ENCODE measurements at regions of chr3 and their contacts with region 1.

Region 1: DNA sequence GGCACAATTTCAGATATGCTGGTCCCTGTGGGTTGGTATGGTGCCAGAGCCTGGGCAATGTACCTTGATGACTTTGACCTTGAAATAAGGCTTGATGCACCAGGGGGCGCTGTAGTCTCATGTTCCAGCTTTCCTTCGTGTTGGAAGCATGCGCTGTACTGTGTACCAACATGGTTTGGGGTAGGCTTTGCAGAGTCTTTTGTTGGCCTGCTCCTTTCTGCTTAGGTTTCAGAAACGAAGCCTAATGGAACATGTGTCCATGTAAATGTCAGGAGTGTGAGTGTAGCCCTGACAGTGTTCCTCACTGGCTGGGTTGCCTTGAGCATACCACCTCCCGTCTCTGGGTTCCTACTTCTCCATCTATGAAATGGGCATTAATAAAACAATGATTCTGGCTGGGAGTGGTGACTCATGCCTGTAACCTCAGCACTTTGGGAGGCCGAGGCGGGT is 3.6 kb upstream of the CCR4 start:
- DNase-seq: peak; percentile 96
- H3K4me3 Mint-ChIP-seq: no peak overlapping the region
- H3K27ac Mint-ChIP-seq: peak overlapping the region; percentile 97
- H3K4me1 Mint-ChIP-seq: peaks cover 46% of the 10 kb centered on the region
- H3K27me3 Mint-ChIP-seq: no peaks in the 10 kb centered on the region

Region 2: GRCh38 chr3:32922078-32922477 is 25.7 kb before region 1 on chr3:
- CTCF ChIA-PET with region 1: no interaction called
- POLR2A ChIA-PET with region 1: no interaction called
- intact Hi-C with region 1: no loop called
- DNase-seq: no peak
- H3K4me3 Mint-ChIP-seq: no peak overlapping the region
- H3K27ac Mint-ChIP-seq: no peak overlapping the region
- H3K4me1 Mint-ChIP-seq: no peaks in the 10 kb centered on the region
- H3K27me3 Mint-ChIP-seq: peaks cover 1% of the 10 kb centered on the region

Region 3: DNA sequence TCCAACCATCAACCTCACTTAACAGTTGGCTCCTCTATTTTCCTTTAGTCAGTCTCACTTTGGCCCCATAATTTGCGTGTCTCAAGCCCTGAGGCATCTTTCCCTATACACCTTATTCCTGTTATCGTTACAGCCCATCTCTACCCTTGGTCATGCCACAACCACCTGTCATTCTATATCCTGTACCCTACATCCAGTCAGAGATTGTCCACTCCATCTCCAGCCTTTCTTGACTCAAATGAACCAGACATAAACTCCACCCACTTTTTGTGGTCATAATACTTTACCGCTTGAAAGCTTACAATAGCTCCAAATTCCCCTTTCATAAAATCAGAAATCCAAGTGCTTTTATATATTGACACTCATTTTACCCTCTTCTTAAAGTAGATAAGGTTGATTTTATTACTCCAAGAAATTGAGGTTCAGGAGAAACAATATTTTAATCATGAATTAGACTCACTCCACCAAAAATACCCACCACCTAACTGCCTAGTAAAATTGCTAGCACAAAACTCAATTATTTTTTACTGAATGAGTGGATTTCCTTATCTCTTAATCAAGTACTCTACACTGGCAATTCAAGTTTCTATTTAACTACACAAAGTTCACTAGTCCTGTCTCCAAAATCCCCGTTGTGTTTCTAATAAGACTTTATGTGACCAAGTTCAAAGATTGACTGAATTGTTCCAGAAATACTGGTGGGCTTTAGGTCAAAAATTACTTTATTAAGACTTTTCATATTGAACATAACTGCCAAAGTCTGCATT is 12.8 kb after region 1 on chr3:
- CTCF ChIA-PET with region 1: interaction called, 24 read pairs
- POLR2A ChIA-PET with region 1: interaction called, 18 read pairs
- intact Hi-C with region 1: loop called (anchors 1 kb)
- DNase-seq: peak; percentile 54
- H3K4me3 Mint-ChIP-seq: peak overlapping the region; percentile 41
- H3K27ac Mint-ChIP-seq: peak overlapping the region; percentile 97
- H3K4me1 Mint-ChIP-seq: peaks cover 84% of the 10 kb centered on the region
- H3K27me3 Mint-ChIP-seq: no peaks in the 10 kb centered on the region

Region 4: GRCh38 chr3:32998631-32999451 is 51.0 kb after region 1 on chr3:
- CTCF ChIA-PET with region 1: interaction called, 21 read pairs
- POLR2A ChIA-PET with region 1: interaction called, 13 read pairs
- intact Hi-C with region 1: no loop called
- DNase-seq: no peak
- H3K4me3 Mint-ChIP-seq: peak overlapping the region; percentile 59
- H3K27ac Mint-ChIP-seq: peak overlapping the region; percentile 86
- H3K4me1 Mint-ChIP-seq: peaks cover 87% of the 10 kb centered on the region
- H3K27me3 Mint-ChIP-seq: no peaks in the 10 kb centered on the region

Region 5: GRCh38 chr3:33030802-33031201 is 83.0 kb after region 1 on chr3:
- CTCF ChIA-PET with region 1: interaction called, 36 read pairs
- POLR2A ChIA-PET with region 1: interaction called, 3 read pairs
- intact Hi-C with region 1: loop called (anchors 1 kb)
- DNase-seq: peak; percentile 72
- H3K4me3 Mint-ChIP-seq: peak overlapping the region; percentile 36
- H3K27ac Mint-ChIP-seq: peak overlapping the region; percentile 76
- H3K4me1 Mint-ChIP-seq: peaks cover 34% of the 10 kb centered on the region
- H3K27me3 Mint-ChIP-seq: no peaks in the 10 kb centered on the region

Region 6: DNA sequence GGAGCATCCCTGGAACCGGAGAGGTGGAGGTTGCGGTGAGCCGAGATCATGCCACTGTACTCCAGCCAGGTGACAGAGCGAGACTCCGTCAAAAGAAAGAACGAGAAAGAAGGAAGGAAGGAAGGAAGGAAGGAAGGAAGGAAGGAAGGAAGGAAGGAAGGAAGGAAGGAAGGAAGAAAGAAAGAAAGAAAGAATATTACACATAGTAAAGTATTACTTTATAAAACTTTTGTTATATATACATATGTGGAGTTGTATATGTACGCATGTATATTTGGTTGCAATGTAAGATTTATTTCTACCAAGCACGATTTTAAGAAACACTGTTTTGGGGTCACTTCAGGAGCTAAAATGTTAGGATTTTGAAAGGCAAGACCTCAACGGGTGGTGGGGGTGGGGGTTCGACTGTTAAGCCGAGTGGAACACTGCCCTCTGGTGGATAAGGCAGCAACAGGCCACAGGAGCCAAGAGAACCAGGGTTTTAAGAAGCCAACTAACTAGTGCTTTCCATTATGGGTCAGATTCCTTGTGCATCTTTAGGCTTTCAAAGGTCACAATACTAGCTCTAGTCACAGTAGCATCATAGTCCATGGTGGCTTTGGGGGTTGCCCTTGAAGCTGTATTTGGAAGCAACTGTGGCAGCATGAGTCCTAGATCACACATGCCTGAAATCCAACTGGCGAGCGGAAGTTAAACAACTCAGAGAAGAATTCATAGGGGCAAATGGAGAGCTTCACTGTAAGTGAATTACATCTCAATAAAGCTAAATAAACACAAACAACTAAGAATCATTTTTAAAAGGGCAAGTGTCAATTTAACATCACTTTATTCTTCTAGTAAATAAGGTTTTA is 126.6 kb after region 1 on chr3:
- CTCF ChIA-PET with region 1: interaction called, 159 read pairs
- POLR2A ChIA-PET with region 1: interaction called, 3 read pairs
- intact Hi-C with region 1: loop called (anchors 1 kb)
- DNase-seq: peak; percentile 82
- H3K4me3 Mint-ChIP-seq: no peak overlapping the region
- H3K27ac Mint-ChIP-seq: peak overlapping the region; percentile 21
- H3K4me1 Mint-ChIP-seq: peaks cover 43% of the 10 kb centered on the region
- H3K27me3 Mint-ChIP-seq: no peaks in the 10 kb centered on the region

Region 7: GRCh38 chr3:33372218-33373081 is 424.6 kb after region 1 on chr3:
- CTCF ChIA-PET with region 1: interaction called, 49 read pairs
- POLR2A ChIA-PET with region 1: no interaction called
- intact Hi-C with region 1: loop called (anchors 1 kb)
- DNase-seq: peak; percentile 49
- H3K4me3 Mint-ChIP-seq: no peak overlapping the region
- H3K27ac Mint-ChIP-seq: no peak overlapping the region
- H3K4me1 Mint-ChIP-seq: peaks cover 7% of the 10 kb centered on the region
- H3K27me3 Mint-ChIP-seq: peaks cover 10% of the 10 kb centered on the region

Region 8: GRCh38 chr3:33798411-33799201 is 850.8 kb after region 1 on chr3 and contains the start of gene PDCD6IP:
- CTCF ChIA-PET with region 1: no interaction called
- POLR2A ChIA-PET with region 1: no interaction called
- intact Hi-C with region 1: loop called (anchors 10 kb)
- DNase-seq: peak; percentile 94
- H3K4me3 Mint-ChIP-seq: peak within 1 kb of the TSS; percentile 95
- H3K27ac Mint-ChIP-seq: peak within 1 kb of the TSS; percentile 89
- H3K4me1 Mint-ChIP-seq: peaks cover 56% of the 10 kb centered on the region
- H3K27me3 Mint-ChIP-seq: no peaks in the 10 kb centered on the region
- total RNA-seq, gene PDCD6IP: 163 to 168 TPM

Measured in activated CD4-positive, alpha-beta memory T cell treated with anti-CD3 and anti-CD28 coated beads for 36 hours (primary cell).